B cell (primary cell): ENCODE measurements at regions of chr6 and their contacts with region 1.

Region 1: GRCh38 chr6:90179190-90180169 is 117.2 kb downstream of the BACH2 start:
- DNase-seq: peak; percentile 49
- ATAC-seq: no peak
- H3K4me3 ChIP-seq: peak overlapping the region in 1 of 5 experiments; percentile 37
- H3K4me3 Mint-ChIP-seq: peak overlapping the region; percentile 79
- H3K27ac ChIP-seq: peak overlapping the region; percentile 61 to 91
- H3K27ac Mint-ChIP-seq: peak overlapping the region; percentile 81
- H3K4me1 ChIP-seq: peaks cover 56 to 64% of the 10 kb centered on the region in 2 donors
- H3K4me1 Mint-ChIP-seq: peaks cover 81% of the 10 kb centered on the region
- H3K27me3 ChIP-seq: no peaks in the 10 kb centered on the region
- H3K27me3 Mint-ChIP-seq: no peaks in the 10 kb centered on the region
- CTCF ChIP-seq: peak; percentile 73

Region 2: DNA sequence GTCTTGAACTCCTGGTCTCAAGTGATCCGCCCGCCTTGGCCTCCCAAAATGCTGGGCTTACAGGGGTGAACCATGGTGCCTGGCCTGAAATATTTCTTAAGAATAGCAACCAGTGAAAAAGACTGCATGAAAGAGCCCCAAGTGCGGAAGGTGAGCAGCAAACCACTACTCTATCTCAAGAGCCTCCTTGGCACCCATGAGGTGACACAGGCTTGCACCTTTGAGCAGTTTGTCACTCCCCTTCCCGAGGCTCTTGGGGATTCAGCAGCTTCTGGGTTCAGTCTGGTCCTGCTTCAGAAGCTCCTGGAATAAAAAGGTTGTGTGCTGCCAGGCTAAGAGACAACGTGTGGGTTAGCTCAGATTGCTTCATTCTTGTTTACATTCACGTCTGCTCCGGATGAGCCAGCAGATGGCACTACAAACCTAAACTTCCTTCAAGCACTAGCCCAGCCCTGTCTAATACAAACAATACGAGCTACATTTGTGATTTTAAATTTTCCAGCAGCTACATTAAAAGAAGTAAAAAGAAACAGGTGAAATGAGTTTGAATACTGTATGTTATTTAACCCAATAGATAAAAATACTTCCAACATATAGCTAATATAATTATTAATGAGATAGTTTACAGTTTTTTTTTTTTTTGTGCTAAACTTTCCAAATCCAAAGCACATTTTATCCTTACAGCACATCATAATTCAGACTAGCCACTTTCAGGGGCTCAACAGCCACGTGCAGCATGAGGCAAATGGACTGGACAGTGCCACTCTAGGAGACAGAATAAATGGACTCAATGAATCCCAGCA is 239.1 kb before region 1 on chr6:
- CTCF ChIA-PET with region 1: interaction called, 10 read pairs
- POLR2A ChIA-PET with region 1: interaction called, 6 read pairs
- intact Hi-C with region 1: no loop called
- DNase-seq: peak; percentile 68
- ATAC-seq: peak; percentile 81
- H3K4me3 ChIP-seq: no peak overlapping the region
- H3K4me3 Mint-ChIP-seq: no peak overlapping the region
- H3K27ac ChIP-seq: no peak overlapping the region
- H3K27ac Mint-ChIP-seq: peak overlapping the region; percentile 64
- H3K4me1 ChIP-seq: no peaks in the 10 kb centered on the region
- H3K4me1 Mint-ChIP-seq: peaks cover 7% of the 10 kb centered on the region
- H3K27me3 ChIP-seq: no peaks in the 10 kb centered on the region
- H3K27me3 Mint-ChIP-seq: no peaks in the 10 kb centered on the region
- CTCF ChIP-seq: peak; percentile 79

Region 3: GRCh38 chr6:90103056-90103800 is 76.3 kb before region 1 on chr6:
- CTCF ChIA-PET with region 1: interaction called, 4 read pairs
- POLR2A ChIA-PET with region 1: interaction called, 4 read pairs
- intact Hi-C with region 1: loop called (anchors 5 kb)
- DNase-seq: peak; percentile 71
- ATAC-seq: peak; percentile 62
- H3K4me3 ChIP-seq: peak overlapping the region in 2 of 5 experiments; percentile 6 to 40
- H3K4me3 Mint-ChIP-seq: peak overlapping the region; percentile 89
- H3K27ac ChIP-seq: peak overlapping the region in 1 of 2 donors; percentile 78
- H3K27ac Mint-ChIP-seq: peak overlapping the region; percentile 87
- H3K4me1 ChIP-seq: peaks cover 81 to 86% of the 10 kb centered on the region in 2 donors
- H3K4me1 Mint-ChIP-seq: peaks cover 92% of the 10 kb centered on the region
- H3K27me3 ChIP-seq: no peaks in the 10 kb centered on the region
- H3K27me3 Mint-ChIP-seq: no peaks in the 10 kb centered on the region
- CTCF ChIP-seq: no peak

Region 4: GRCh38 chr6:90121982-90122381 is 57.5 kb before region 1 on chr6:
- CTCF ChIA-PET with region 1: no interaction called
- POLR2A ChIA-PET with region 1: no interaction called
- intact Hi-C with region 1: loop called (anchors 5 kb)
- DNase-seq: peak; percentile 44
- ATAC-seq: peak; percentile 81
- H3K4me3 ChIP-seq: no peak overlapping the region
- H3K4me3 Mint-ChIP-seq: peak overlapping the region; percentile 37
- H3K27ac ChIP-seq: peak overlapping the region in 1 of 2 donors; percentile 72
- H3K27ac Mint-ChIP-seq: peak overlapping the region; percentile 77
- H3K4me1 ChIP-seq: peaks cover 47 to 51% of the 10 kb centered on the region in 2 donors
- H3K4me1 Mint-ChIP-seq: peaks cover 68% of the 10 kb centered on the region
- H3K27me3 ChIP-seq: no peaks in the 10 kb centered on the region
- H3K27me3 Mint-ChIP-seq: no peaks in the 10 kb centered on the region
- CTCF ChIP-seq: no peak

Region 5: GRCh38 chr6:90135667-90136066 is 43.8 kb before region 1 on chr6:
- CTCF ChIA-PET with region 1: no interaction called
- POLR2A ChIA-PET with region 1: no interaction called
- intact Hi-C with region 1: loop called (anchors 5 kb)
- DNase-seq: no peak
- ATAC-seq: no peak
- H3K4me3 ChIP-seq: no peak overlapping the region
- H3K4me3 Mint-ChIP-seq: no peak overlapping the region
- H3K27ac ChIP-seq: peak overlapping the region in 1 of 2 donors; percentile 64
- H3K27ac Mint-ChIP-seq: peak overlapping the region; percentile 24
- H3K4me1 ChIP-seq: peaks cover 39 to 59% of the 10 kb centered on the region in 2 donors
- H3K4me1 Mint-ChIP-seq: peaks cover 77% of the 10 kb centered on the region
- H3K27me3 ChIP-seq: no peaks in the 10 kb centered on the region
- H3K27me3 Mint-ChIP-seq: no peaks in the 10 kb centered on the region
- CTCF ChIP-seq: no peak

Region 6: GRCh38 chr6:90238496-90239266 is 59.2 kb after region 1 on chr6:
- CTCF ChIA-PET with region 1: no interaction called
- POLR2A ChIA-PET with region 1: interaction called, 11 read pairs
- intact Hi-C with region 1: no loop called
- DNase-seq: no peak
- ATAC-seq: no peak
- H3K4me3 ChIP-seq: no peak overlapping the region
- H3K4me3 Mint-ChIP-seq: no peak overlapping the region
- H3K27ac ChIP-seq: peak overlapping the region in 1 of 2 donors; percentile 55
- H3K27ac Mint-ChIP-seq: peak overlapping the region; percentile 0
- H3K4me1 ChIP-seq: peaks cover 25 to 32% of the 10 kb centered on the region in 2 donors
- H3K4me1 Mint-ChIP-seq: peaks cover 61% of the 10 kb centered on the region
- H3K27me3 ChIP-seq: no peaks in the 10 kb centered on the region
- H3K27me3 Mint-ChIP-seq: no peaks in the 10 kb centered on the region
- CTCF ChIP-seq: no peak

Region 7: GRCh38 chr6:90458353-90459224 is 279.1 kb after region 1 on chr6:
- CTCF ChIA-PET with region 1: no interaction called
- POLR2A ChIA-PET with region 1: no interaction called
- intact Hi-C with region 1: no loop called
- DNase-seq: no peak
- ATAC-seq: no peak
- H3K4me3 ChIP-seq: no peak overlapping the region
- H3K4me3 Mint-ChIP-seq: no peak overlapping the region
- H3K27ac ChIP-seq: no peak overlapping the region
- H3K27ac Mint-ChIP-seq: no peak overlapping the region
- H3K4me1 ChIP-seq: peaks cover 9 to 15% of the 10 kb centered on the region in 2 donors
- H3K4me1 Mint-ChIP-seq: peaks cover 4% of the 10 kb centered on the region
- H3K27me3 ChIP-seq: peaks cover 0 to 4% (median 2%) of the 10 kb centered on the region in 4 experiments
- H3K27me3 Mint-ChIP-seq: peaks cover 3% of the 10 kb centered on the region
- CTCF ChIP-seq: no peak